Heart left ventricle (tissue), 16 donors: ENCODE measurements at regions of chr12 and their contacts with region 1.

Region 1: DNA sequence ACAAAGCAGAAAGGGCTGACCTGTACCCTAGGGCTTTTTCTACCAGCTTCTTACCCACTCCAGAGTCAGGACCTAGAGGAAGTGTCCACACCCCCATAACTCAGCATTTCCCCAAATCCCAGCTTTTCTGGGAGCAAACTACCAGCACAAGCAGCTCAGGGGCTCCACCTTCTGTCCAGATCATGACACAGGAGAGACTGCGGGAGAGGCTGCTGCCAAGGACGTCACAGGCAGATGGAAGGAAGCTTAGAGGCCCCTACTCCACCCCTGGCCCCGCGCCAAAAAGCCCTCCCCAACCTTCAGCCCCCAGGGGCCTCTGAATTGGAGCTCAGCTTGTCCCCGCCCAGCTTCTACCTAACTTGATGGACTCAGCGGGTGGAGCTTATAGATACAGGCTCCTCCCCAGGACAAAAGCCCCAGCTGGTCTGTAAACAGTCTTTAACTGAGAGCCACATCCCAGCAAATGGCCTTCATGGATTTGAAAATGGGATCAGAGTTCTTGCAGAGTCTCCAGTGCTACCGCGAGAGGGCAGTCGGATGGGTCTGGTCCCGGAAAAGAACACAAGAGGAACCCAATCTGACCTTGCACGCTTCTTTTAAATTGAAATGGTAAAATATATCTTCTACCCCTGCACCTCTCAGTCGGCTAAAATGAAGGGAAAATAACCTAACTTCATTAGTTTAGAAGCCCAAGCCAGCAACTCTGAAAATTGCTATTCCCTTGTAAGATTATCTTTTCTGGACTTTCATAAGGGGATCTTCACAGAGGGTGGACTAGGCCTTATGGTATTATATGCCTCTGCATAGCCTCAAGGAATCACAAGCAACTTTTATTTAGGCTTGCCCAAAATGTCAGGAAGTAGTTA is 6.8 kb upstream of the BAZ2A start:
- DNase-seq: peak; percentile 98 to 100 (median 99)
- ATAC-seq: peak; percentile 77 to 87 (median 84)
- H3K4me3 ChIP-seq: peak overlapping the region in 11 of 12 donors; percentile 60 to 87 (median 83)
- H3K27ac ChIP-seq: peak overlapping the region; percentile 83 to 98 (median 96)
- H3K4me1 ChIP-seq: peaks cover 13 to 82% (median 51%) of the 10 kb centered on the region in 12 donors
- H3K27me3 ChIP-seq: no peaks in the 10 kb centered on the region
- CTCF ChIP-seq: peak; percentile 48 to 82 (median 67)
- POLR2A ChIP-seq: peak in 1 of 2 donors; percentile 73

Region 2: DNA sequence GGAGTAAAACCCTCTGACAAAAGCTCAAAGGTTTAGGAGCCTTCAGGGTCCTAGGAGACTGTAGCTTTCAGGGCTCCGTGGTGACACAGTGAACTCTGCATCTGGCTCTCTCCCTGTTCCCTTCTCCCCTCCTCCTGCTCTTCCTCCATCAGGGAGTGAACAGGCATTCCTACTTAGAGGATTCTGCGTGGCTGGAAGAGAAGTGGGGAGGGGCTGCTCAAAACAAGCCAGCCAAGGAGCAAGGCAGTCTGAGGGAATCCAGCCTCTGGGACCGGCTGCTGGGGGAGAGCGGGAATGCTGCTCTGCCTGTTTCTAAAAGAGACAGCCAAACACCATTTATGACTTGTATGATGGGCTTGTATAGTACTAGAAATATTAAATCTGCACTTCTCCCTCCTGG is 65.8 kb before region 1 on chr12:
- intact Hi-C with region 1: loop called in 1 of 10 experiments (anchors 10 kb)
- DNase-seq: peak in 1 of 5 donors; percentile 20
- ATAC-seq: peak in 3 of 4 donors; percentile 29 to 43 (median 31)
- H3K4me3 ChIP-seq: no peak overlapping the region
- H3K27ac ChIP-seq: peak overlapping the region; percentile 4 to 93 (median 54)
- H3K4me1 ChIP-seq: peaks cover 4 to 55% (median 31%) of the 10 kb centered on the region in 12 donors
- H3K27me3 ChIP-seq: no peaks in the 10 kb centered on the region
- CTCF ChIP-seq: no peak
- POLR2A ChIP-seq: no peak

Region 3: DNA sequence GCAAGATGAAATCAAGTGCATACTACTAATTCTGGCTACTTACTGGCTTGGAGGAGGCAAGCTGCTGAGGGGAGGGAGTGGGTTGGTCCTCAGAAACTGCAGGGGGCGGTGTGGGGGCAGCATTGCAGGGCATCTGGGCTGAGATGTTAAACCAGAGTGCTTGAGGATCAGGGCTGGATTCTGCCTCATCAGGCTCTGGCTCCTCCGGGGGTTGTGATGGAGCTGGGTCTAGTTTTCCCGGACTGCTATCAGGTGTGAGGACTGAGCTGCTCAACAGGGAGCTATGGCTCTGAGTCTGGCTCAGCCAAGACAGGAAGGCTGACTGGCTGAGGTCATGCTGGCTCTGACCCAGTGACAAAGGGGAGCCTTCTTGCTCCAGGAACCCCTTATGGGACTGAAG is 35.4 kb before region 1 on chr12:
- intact Hi-C with region 1: loop called in 2 of 10 experiments (anchors 5 kb)
- DNase-seq: peak in 4 of 5 donors; percentile 23 to 59 (median 44)
- ATAC-seq: peak; percentile 57 to 77 (median 68)
- H3K4me3 ChIP-seq: no peak overlapping the region
- H3K27ac ChIP-seq: peak overlapping the region in 8 of 12 donors; percentile 1 to 56 (median 24)
- H3K4me1 ChIP-seq: peaks cover 0 to 18% (median 10%) of the 10 kb centered on the region in 12 donors
- H3K27me3 ChIP-seq: no peaks in the 10 kb centered on the region
- CTCF ChIP-seq: peak in 2 of 12 donors; percentile 9 to 18
- POLR2A ChIP-seq: no peak

Region 4: GRCh38 chr12:56763753-56764657 is 127.1 kb after region 1 on chr12:
- intact Hi-C with region 1: no loop called
- DNase-seq: no peak
- ATAC-seq: no peak
- H3K4me3 ChIP-seq: no peak overlapping the region
- H3K27ac ChIP-seq: peak overlapping the region in 1 of 12 donors; percentile 51
- H3K4me1 ChIP-seq: no peaks in the 10 kb centered on the region
- H3K27me3 ChIP-seq: no peaks in the 10 kb centered on the region
- CTCF ChIP-seq: no peak
- POLR2A ChIP-seq: no peak